ENCODE measurements at regions of chr5 and their contacts with region 1.

Region 1: GRCh38 chr5:159915904-159916840 is at the start of gene ADRA1B:
- DNase-seq: no peak
- H3K4me3 ChIP-seq: peak within 1 kb of the TSS; percentile 33
- H3K27me3 ChIP-seq: no peaks in the 10 kb centered on the region
- CTCF ChIP-seq: peak; percentile 55
- polyA plus RNA-seq, gene ADRA1B: 1.1 and 2.1 TPM in 2 replicates

Region 2: DNA sequence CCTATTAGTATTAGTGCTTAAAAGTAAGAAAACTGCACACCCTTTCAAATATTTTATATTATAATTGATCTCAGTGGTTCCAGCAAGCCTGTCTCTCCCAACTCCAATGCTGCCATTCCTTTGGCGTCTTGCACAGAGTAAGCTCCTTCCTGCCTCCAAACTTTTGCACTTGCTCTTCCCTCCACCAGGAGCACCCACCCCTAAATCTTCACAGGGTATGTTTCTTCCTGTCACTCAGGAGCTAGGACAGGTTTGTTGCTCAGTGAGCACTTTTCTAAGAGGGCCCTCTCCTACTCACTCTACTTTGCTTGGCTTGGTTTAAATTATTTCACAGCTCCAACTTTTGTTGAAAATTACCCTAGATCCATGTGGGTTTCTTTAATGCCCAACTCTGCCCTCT is 189.0 kb before region 1 on chr5:
- CTCF ChIA-PET with region 1: no interaction called
- POLR2A ChIA-PET with region 1: interaction called, 23 read pairs
- DNase-seq: no peak
- H3K4me3 ChIP-seq: no peak overlapping the region
- H3K27me3 ChIP-seq: peaks cover 1% of the 10 kb centered on the region; the same call in 1 of the 2 replicates
- CTCF ChIP-seq: no peak

Region 3: GRCh38 chr5:159814810-159815585 is 101.2 kb before region 1 on chr5:
- CTCF ChIA-PET with region 1: no interaction called
- POLR2A ChIA-PET with region 1: no interaction called
- DNase-seq: no peak
- H3K4me3 ChIP-seq: no peak overlapping the region
- H3K27me3 ChIP-seq: no peaks in the 10 kb centered on the region
- CTCF ChIP-seq: no peak

Region 4: DNA sequence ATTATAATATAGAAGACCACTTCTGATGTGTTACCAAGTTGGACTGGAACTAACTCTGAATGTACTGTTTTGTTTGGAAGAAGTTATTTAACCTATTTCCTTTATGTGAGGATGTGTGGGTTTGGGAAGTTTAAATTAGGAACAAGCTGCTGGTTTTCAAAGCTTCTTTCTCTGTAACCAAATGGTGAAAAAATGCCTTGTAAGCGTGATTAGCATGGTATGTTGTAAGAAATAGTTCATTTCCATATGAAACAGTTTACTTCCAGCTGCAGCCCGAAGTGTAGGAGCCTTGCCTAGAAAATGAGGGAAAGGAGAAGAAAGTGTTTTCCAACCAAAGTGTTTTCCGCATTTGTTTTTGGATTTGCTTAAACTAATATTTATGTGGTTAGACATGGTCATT is 128.8 kb after region 1 on chr5:
- CTCF ChIA-PET with region 1: no interaction called
- POLR2A ChIA-PET with region 1: no interaction called
- DNase-seq: no peak
- H3K4me3 ChIP-seq: no peak overlapping the region
- H3K27me3 ChIP-seq: no peaks in the 10 kb centered on the region
- CTCF ChIP-seq: no peak

Region 5: GRCh38 chr5:160379511-160379910 is 463.3 kb after region 1 on chr5:
- CTCF ChIA-PET with region 1: no interaction called
- POLR2A ChIA-PET with region 1: no interaction called
- DNase-seq: no peak
- H3K4me3 ChIP-seq: no peak overlapping the region
- H3K27me3 ChIP-seq: peaks cover 2% of the 10 kb centered on the region
- CTCF ChIP-seq: no peak

Measured in BJ (cell line).